WTC11 (cell line): ENCODE measurements at regions of chr4 and their contacts with region 1.

Region 1: DNA sequence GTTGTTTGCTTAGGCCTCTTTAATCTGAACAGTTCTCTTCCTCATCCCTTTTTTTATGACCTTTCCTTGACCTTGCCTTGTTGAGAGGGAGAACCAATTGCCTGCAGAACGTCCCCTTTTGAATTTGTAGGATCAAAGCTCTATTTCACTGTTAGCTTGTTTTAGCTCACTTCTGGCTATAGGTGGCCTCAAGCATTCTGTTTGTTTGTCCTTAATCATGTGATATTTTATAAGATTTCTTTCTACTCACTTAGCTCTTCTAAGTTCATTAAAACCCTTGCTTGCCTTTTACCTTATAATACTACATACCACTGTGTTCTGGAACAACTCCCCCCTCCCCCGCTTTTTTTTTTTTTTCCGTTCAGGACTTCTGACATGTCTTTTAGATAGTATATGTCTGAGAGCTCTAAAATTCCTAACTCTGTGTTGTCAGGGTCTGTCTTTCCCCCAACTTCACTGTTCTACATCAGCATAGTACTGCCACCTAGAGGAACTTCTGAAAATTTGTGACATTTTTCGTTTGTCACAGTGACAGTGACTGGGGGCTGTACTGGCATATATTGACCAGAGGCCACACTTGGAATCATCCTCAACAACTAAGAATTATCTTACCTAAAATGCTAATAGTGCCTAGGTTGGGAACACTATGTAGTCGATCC is 128.5 kb downstream of the LARP7 start:
- DNase-seq: no peak
- ATAC-seq: peak; percentile 78
- H3K4me3 Mint-ChIP-seq: peak overlapping the region; percentile 47
- H3K27ac Mint-ChIP-seq: peak overlapping the region; percentile 95
- H3K4me1 Mint-ChIP-seq: peaks cover 38% of the 10 kb centered on the region
- H3K27me3 Mint-ChIP-seq: no peaks in the 10 kb centered on the region
- CTCF ChIP-seq: peak; percentile 68

Region 2: DNA sequence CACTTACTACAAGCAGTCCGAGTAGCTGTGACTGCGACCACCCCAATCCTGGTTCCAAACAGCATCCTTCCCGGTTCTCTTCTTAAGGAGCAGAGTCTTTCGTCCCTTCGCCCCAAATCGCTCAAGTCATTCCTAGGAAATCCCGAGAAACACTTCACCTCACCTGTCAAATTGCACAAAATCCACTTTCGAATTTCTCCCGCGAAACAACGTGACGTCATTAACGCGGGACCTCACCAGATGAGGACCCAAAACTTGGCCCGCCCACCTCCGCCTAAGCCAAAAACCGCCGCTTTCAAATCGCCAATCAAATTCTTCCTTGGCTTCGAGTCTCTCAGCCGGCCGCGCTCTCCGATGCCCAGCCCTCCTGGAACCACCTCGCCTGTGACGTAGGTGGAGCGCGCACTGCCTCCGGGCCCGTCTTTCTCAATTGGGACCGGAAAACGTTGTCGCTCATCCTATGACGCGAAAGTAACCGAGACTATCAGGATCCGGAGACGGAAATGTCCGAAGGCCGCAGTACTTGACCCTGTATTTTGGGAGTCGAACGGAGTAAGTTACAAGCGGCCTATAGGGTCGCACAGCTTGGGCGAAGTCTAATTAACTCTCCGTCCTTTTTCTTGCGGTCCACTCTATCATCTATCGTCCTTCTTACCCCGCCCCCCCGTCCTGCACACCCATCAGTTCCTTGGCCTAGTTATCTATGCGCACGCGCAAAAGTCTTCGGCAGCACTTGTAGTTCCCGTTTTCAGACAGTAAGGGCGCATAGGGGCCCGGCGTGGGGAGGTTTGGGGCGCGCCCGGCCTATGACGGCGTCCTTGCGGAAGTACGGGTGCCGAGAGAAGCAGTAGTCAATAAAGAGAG is 128.5 kb before region 1 on chr4 and contains the starts of genes LARP7 and ZGRF1:
- CTCF ChIA-PET with region 1: interaction called, 116 read pairs
- POLR2A ChIA-PET with region 1: interaction called, 4 read pairs
- DNase-seq: peak; percentile 98
- ATAC-seq: peak; percentile 93
- H3K4me3 Mint-ChIP-seq: no peak within 1 kb of the TSS
- H3K27ac Mint-ChIP-seq: peak within 1 kb of the TSS; percentile 29; the same call in 1 of the 2 replicates
- H3K4me1 Mint-ChIP-seq: peaks cover 32% of the 10 kb centered on the region
- H3K27me3 Mint-ChIP-seq: no peaks in the 10 kb centered on the region
- CTCF ChIP-seq: peak; percentile 97
- total RNA-seq, gene LARP7: 37.5 to 46.2 TPM (median 42.3 TPM) in 3 replicates
- total RNA-seq, gene ZGRF1: 46.6 to 56.2 TPM (median 47.1 TPM) in 3 replicates

Region 3: GRCh38 chr4:112655270-112655669 is 110.2 kb before region 1 on chr4:
- CTCF ChIA-PET with region 1: interaction called, 39 read pairs
- POLR2A ChIA-PET with region 1: interaction called, 14 read pairs
- DNase-seq: no peak
- ATAC-seq: no peak
- H3K4me3 Mint-ChIP-seq: peak overlapping the region; percentile 25; the same call in 1 of the 2 replicates
- H3K27ac Mint-ChIP-seq: peak overlapping the region; percentile 99
- H3K4me1 Mint-ChIP-seq: peaks cover 69% of the 10 kb centered on the region
- H3K27me3 Mint-ChIP-seq: no peaks in the 10 kb centered on the region
- CTCF ChIP-seq: no peak

Region 4: GRCh38 chr4:112726031-112726430 is 39.4 kb before region 1 on chr4:
- CTCF ChIA-PET with region 1: interaction called, 13 read pairs
- POLR2A ChIA-PET with region 1: interaction called, 4 read pairs
- DNase-seq: no peak
- ATAC-seq: no peak
- H3K4me3 Mint-ChIP-seq: no peak overlapping the region
- H3K27ac Mint-ChIP-seq: peak overlapping the region; percentile 82
- H3K4me1 Mint-ChIP-seq: peaks cover 45% of the 10 kb centered on the region
- H3K27me3 Mint-ChIP-seq: no peaks in the 10 kb centered on the region
- CTCF ChIP-seq: no peak

Region 5: DNA sequence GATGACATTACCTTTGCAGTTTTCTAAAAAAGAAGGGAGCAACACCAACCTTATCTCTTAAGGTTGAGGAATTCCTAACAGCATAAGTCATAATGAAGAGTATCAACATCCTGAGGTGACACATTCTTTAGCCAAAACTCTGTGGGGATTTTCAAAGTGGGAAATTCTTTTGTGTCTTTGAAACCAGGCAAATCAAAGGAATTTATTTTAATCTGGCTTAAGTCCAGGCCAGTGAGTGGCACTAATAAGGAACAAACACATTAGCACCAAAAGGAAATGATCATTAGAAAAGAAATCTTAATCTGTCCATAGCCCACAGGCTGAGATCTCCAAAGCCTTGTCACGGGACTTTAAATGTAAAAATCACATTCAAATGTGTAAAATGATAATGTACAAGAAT is 18.4 kb before region 1 on chr4:
- CTCF ChIA-PET with region 1: interaction called, 51 read pairs
- POLR2A ChIA-PET with region 1: interaction called, 12 read pairs
- DNase-seq: no peak
- ATAC-seq: peak; percentile 36
- H3K4me3 Mint-ChIP-seq: peak overlapping the region; percentile 47
- H3K27ac Mint-ChIP-seq: peak overlapping the region; percentile 99
- H3K4me1 Mint-ChIP-seq: peaks cover 64% of the 10 kb centered on the region
- H3K27me3 Mint-ChIP-seq: no peaks in the 10 kb centered on the region
- CTCF ChIP-seq: no peak

Region 6: GRCh38 chr4:112801341-112801740 is 35.9 kb after region 1 on chr4:
- CTCF ChIA-PET with region 1: no interaction called
- POLR2A ChIA-PET with region 1: no interaction called
- DNase-seq: no peak
- ATAC-seq: no peak
- H3K4me3 Mint-ChIP-seq: no peak overlapping the region
- H3K27ac Mint-ChIP-seq: peak overlapping the region; percentile 7; the same call in 1 of the 2 replicates
- H3K4me1 Mint-ChIP-seq: peaks cover 12% of the 10 kb centered on the region
- H3K27me3 Mint-ChIP-seq: no peaks in the 10 kb centered on the region
- CTCF ChIP-seq: no peak

Region 7: GRCh38 chr4:112817933-112818593 is 52.6 kb after region 1 on chr4:
- CTCF ChIA-PET with region 1: interaction called, 13 read pairs
- POLR2A ChIA-PET with region 1: interaction called, 3 read pairs
- DNase-seq: peak; percentile 81
- ATAC-seq: peak; percentile 96
- H3K4me3 Mint-ChIP-seq: peak overlapping the region; percentile 58
- H3K27ac Mint-ChIP-seq: peak overlapping the region; percentile 71
- H3K4me1 Mint-ChIP-seq: peaks cover 21% of the 10 kb centered on the region
- H3K27me3 Mint-ChIP-seq: no peaks in the 10 kb centered on the region
- CTCF ChIP-seq: no peak

Region 8: GRCh38 chr4:112938461-112939058 is 173.1 kb after region 1 on chr4:
- CTCF ChIA-PET with region 1: interaction called, 59 read pairs
- POLR2A ChIA-PET with region 1: no interaction called
- DNase-seq: no peak
- ATAC-seq: peak; percentile 57; the same call in 1 of the 2 replicates
- H3K4me3 Mint-ChIP-seq: no peak overlapping the region
- H3K27ac Mint-ChIP-seq: no peak overlapping the region
- H3K4me1 Mint-ChIP-seq: peaks cover 16% of the 10 kb centered on the region
- H3K27me3 Mint-ChIP-seq: no peaks in the 10 kb centered on the region
- CTCF ChIP-seq: no peak

Region 9: DNA sequence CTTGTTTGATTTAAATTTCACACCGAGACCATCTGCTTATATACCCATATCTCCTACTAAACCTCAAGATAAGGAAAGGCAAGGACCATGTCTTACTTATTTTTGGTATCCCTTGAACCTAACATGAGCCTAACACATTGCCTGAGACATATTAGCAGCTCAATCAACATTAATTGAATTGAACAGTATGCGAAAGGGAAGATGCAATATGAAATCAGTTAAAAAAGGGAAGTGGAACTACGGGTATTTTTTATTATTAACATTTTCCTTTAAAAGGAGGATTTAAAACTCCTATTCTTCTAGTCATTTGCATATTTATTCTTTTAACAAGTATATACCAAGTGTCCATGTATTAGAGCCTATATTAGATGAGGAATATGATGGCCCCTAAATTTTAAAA is 799.0 kb after region 1 on chr4:
- CTCF ChIA-PET with region 1: no interaction called
- POLR2A ChIA-PET with region 1: no interaction called
- DNase-seq: no peak
- ATAC-seq: no peak
- H3K4me3 Mint-ChIP-seq: no peak overlapping the region
- H3K27ac Mint-ChIP-seq: no peak overlapping the region
- H3K4me1 Mint-ChIP-seq: peaks cover 16% of the 10 kb centered on the region
- H3K27me3 Mint-ChIP-seq: no peaks in the 10 kb centered on the region
- CTCF ChIP-seq: no peak